ENCODE measurements at regions of chr10 and their contacts with region 1.

Region 1: GRCh38 chr10:6202684-6203330 is at the start of gene PFKFB3:
- DNase-seq: peak; percentile 77 to 97
- H3K4me3 ChIP-seq: peak within 1 kb of the TSS; percentile 92 to 97
- H3K27ac ChIP-seq: peak within 1 kb of the TSS; percentile 96 to 99
- H3K4me1 ChIP-seq: peaks cover 0 to 40% of the 10 kb centered on the region in 2 donors
- H3K27me3 ChIP-seq: no peaks in the 10 kb centered on the region
- CTCF ChIP-seq: peak; percentile 95 to 99 (median 98)
- total RNA-seq, gene PFKFB3: 68.0 TPM

Region 2: GRCh38 chr10:5165738-5166137 is 1037.1 kb before region 1 on chr10:
- intact Hi-C with region 1: no loop called
- DNase-seq: no peak
- H3K4me3 ChIP-seq: no peak overlapping the region
- H3K27ac ChIP-seq: no peak overlapping the region
- H3K4me1 ChIP-seq: no peaks in the 10 kb centered on the region
- H3K27me3 ChIP-seq: no peaks in the 10 kb centered on the region
- CTCF ChIP-seq: no peak

Region 3: GRCh38 chr10:6088721-6089390 is 114.0 kb before region 1 on chr10 and contains the start of gene RBM17:
- intact Hi-C with region 1: loop called (anchors 2 kb)
- DNase-seq: peak; percentile 86 to 99
- H3K4me3 ChIP-seq: peak within 1 kb of the TSS; percentile 71 to 96
- H3K27ac ChIP-seq: peak within 1 kb of the TSS; percentile 71 to 84
- H3K4me1 ChIP-seq: peaks cover 4 to 27% of the 10 kb centered on the region in 2 donors
- H3K27me3 ChIP-seq: no peaks in the 10 kb centered on the region
- CTCF ChIP-seq: peak; percentile 99 to 100 (median 100)
- total RNA-seq, gene RBM17: 22.7 TPM

Region 4: GRCh38 chr10:6144406-6145165 is 58.2 kb before region 1 on chr10:
- intact Hi-C with region 1: loop called (anchors 1 kb)
- DNase-seq: peak; percentile 76 to 97
- H3K4me3 ChIP-seq: peak overlapping the region; percentile 88 to 92
- H3K27ac ChIP-seq: peak overlapping the region; percentile 87 to 95
- H3K4me1 ChIP-seq: peaks cover 6 to 16% of the 10 kb centered on the region in 2 donors
- H3K27me3 ChIP-seq: no peaks in the 10 kb centered on the region
- CTCF ChIP-seq: no peak

Region 5: GRCh38 chr10:6221971-6222751 is 19.4 kb after region 1 on chr10:
- intact Hi-C with region 1: loop called (anchors 2 kb)
- DNase-seq: peak in 1 of 2 donors; percentile 90
- H3K4me3 ChIP-seq: peak overlapping the region in 1 of 2 donors; percentile 7
- H3K27ac ChIP-seq: peak overlapping the region; percentile 87 to 93
- H3K4me1 ChIP-seq: peaks cover 10 to 22% of the 10 kb centered on the region in 2 donors
- H3K27me3 ChIP-seq: no peaks in the 10 kb centered on the region
- CTCF ChIP-seq: no peak

Region 6: DNA sequence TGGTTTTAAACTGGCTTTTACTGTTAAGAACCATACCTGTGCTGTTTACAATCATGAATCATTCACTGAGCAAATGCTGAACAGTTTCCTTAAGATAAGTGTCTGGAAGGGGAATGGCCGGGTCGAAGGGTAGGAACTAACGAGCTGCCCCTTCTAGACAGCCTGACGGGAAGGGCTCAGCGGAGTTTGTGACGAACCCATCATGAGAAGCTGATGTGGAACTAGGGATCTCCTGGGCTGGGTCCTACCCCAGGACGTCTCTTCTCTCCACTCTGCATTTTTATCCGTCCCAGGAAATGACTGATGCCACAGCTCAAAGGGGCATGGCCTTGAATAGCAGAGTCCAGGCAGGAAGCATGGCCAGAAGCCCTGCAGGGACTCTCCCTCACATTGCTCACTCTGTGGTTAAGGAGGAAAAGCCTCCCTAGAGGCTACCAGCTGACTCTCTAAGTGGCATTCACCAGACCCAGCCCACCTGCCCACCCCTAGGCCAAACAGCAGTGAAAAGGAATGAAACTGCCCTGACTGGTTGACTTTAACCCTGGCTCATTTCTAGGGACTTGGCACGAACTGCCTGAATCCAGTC is 111.9 kb after region 1 on chr10:
- intact Hi-C with region 1: no loop called
- DNase-seq: no peak
- H3K4me3 ChIP-seq: peak overlapping the region in 1 of 2 donors; percentile 14
- H3K27ac ChIP-seq: peak overlapping the region; percentile 51 to 54
- H3K4me1 ChIP-seq: peaks cover 3 to 20% of the 10 kb centered on the region in 2 donors
- H3K27me3 ChIP-seq: no peaks in the 10 kb centered on the region
- CTCF ChIP-seq: no peak

Region 7: DNA sequence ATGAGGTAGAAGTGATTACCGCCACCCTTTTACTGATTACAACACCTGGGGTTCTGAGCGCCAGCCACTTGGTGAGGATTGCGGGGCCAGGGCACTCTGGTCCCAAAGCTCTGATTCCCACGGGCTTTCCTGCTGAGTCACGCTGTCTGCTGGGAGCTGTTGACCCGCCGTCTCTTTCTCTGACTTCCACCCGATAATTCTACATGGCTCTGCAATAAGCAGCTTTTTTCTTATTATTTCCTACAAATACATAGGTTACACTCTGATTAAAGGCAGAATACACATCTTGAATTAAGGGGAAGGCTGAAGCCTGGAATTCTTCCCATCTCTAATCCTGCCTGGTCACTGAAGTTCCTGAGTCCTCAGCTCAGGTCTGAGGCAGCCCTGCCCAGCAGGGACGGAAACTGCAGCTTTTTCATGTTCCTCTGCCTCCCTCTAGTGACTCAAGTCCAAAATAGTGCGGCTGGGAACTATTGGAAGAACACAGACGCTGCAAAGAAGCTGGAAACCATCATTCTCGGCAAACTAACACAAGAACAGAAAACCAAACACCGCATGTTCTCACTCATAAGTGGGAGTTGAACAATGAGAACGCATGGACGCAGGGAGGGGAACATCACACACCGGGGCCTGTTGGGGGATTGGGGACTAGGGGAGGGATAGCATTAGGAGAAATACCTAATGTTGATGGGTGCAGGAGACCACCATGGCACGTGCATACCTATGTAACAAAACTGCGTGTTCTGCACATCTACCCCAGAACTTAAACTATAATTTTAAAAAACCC is 198.9 kb after region 1 on chr10:
- intact Hi-C with region 1: loop called (anchors 1 kb)
- DNase-seq: peak; percentile 32 to 88
- H3K4me3 ChIP-seq: peak overlapping the region; percentile 35 to 55
- H3K27ac ChIP-seq: peak overlapping the region; percentile 48 to 71
- H3K4me1 ChIP-seq: peaks cover 0 to 13% of the 10 kb centered on the region in 2 donors
- H3K27me3 ChIP-seq: no peaks in the 10 kb centered on the region
- CTCF ChIP-seq: peak; percentile 68 to 82 (median 77)